ENCODE measurements at regions of chr17 and their contacts with region 1.

Region 1: DNA sequence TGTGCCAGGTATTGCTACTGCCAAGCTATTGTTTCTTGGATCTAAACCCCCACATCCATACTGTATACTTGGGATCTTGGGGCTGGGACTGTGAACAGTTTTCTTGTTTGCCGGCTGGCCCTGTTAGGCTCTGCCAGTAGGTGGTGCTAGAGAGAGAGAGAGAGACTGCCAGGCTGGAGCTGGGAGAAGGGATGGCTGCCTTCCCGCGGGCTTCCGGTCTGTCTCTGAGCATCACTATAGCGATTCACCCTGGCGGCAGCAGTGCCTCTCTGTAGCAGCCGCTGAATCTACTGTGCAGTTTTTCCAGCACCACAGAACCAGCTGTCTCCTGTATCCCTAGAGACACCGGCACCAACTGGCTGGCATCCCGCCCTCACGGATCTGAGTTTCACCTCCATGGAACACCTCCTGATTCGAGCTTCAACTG is 201.2 kb downstream of the UTP18 start:
- DNase-seq: peak; percentile 79
- ATAC-seq: peak; percentile 100
- H3K4me3 Mint-ChIP-seq: no peak overlapping the region
- H3K27ac Mint-ChIP-seq: no peak overlapping the region
- H3K4me1 Mint-ChIP-seq: no peaks in the 10 kb centered on the region
- H3K27me3 Mint-ChIP-seq: no peaks in the 10 kb centered on the region; the same call in 1 of the 2 replicates
- CTCF ChIP-seq: peak; percentile 78

Region 2: DNA sequence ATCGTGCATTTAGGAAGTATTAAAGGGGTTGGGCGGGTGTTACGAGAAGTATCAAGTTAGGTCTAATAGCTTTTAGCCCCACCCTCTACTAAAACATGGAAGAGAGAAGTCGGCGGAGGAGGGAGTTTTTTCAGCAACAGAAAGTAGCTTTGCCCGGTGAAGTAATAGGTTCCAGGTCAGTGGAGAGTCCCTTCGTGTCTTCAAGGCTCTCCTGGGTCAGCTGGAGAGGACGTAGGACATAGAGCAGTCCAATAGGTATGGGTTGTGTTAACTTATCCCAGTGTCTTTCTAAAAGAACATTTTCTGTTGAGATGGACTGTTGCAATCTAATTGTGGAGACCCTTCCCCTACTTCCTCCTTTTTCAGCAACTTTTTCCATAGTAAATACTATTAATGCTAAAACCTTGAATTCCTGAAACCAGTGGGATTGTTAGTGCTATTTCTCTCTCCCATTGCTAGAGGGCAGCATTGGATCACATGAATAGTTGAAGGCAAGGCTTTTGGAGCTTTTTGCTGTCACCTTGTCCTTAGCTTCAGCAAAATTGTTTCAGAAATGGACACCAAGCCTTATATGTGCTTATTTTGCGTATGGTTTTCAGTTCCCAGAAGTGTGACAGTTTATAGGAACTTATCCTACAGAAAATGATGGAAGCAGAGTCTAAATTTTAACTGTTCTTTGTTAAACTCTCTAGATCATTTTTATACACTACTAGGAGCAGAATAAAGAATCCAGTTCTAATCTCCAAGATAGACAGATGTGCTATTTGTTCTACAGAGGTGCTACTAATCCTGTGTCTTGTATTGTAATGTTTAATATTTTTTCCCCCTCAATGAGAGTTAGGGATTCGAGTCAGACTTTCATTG is 162.9 kb before region 1 on chr17:
- CTCF ChIA-PET with region 1: interaction called, 12 read pairs
- POLR2A ChIA-PET with region 1: no interaction called
- DNase-seq: no peak
- ATAC-seq: peak; percentile 80
- H3K4me3 Mint-ChIP-seq: no peak overlapping the region
- H3K27ac Mint-ChIP-seq: peak overlapping the region; percentile 51
- H3K4me1 Mint-ChIP-seq: peaks cover 35% of the 10 kb centered on the region
- H3K27me3 Mint-ChIP-seq: no peaks in the 10 kb centered on the region
- CTCF ChIP-seq: peak; percentile 32; the same call in 1 of the 2 replicates

Region 3: GRCh38 chr17:51407559-51407958 is 54.0 kb before region 1 on chr17:
- CTCF ChIA-PET with region 1: interaction called, 11 read pairs
- POLR2A ChIA-PET with region 1: no interaction called
- DNase-seq: no peak
- ATAC-seq: no peak
- H3K4me3 Mint-ChIP-seq: no peak overlapping the region
- H3K27ac Mint-ChIP-seq: no peak overlapping the region
- H3K4me1 Mint-ChIP-seq: 0 out of 2 replicates have a peak, but pooled peaks cover 4% of the 10 kb centered on the region
- H3K27me3 Mint-ChIP-seq: peaks cover 2% of the 10 kb centered on the region; the same call in 1 of the 2 replicates
- CTCF ChIP-seq: no peak

Region 4: DNA sequence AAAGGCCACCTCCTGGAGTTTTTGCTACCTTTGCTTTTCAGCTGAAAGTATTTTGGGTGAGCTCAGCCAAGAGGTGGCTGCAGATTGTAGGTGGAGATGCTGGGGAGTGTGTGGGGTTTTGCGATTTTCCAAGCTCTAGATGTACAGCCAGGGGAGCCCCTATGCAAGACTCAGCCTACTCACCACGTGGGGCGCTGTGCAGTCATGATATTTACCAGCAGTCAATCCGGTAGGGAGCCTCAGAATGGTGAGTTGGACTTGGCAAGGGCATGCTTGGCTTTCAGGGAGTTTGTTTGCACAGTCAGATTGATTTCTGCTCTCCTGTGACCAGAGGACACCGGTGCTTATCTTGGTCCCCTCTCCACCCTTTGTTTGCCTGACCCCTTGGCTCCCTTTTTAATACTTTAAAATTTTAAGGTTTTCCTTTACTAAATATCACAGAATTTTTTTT is 25.9 kb before region 1 on chr17:
- CTCF ChIA-PET with region 1: interaction called, 28 read pairs
- POLR2A ChIA-PET with region 1: no interaction called
- DNase-seq: peak; percentile 79
- ATAC-seq: peak; percentile 97
- H3K4me3 Mint-ChIP-seq: no peak overlapping the region
- H3K27ac Mint-ChIP-seq: no peak overlapping the region
- H3K4me1 Mint-ChIP-seq: peaks cover 15% of the 10 kb centered on the region
- H3K27me3 Mint-ChIP-seq: no peaks in the 10 kb centered on the region
- CTCF ChIP-seq: peak; percentile 38; the same call in 1 of the 2 replicates

Region 5: GRCh38 chr17:51472670-51473205 is 11.1 kb after region 1 on chr17:
- CTCF ChIA-PET with region 1: interaction called, 37 read pairs
- POLR2A ChIA-PET with region 1: no interaction called
- DNase-seq: no peak
- ATAC-seq: no peak
- H3K4me3 Mint-ChIP-seq: no peak overlapping the region
- H3K27ac Mint-ChIP-seq: no peak overlapping the region
- H3K4me1 Mint-ChIP-seq: peaks cover 14% of the 10 kb centered on the region
- H3K27me3 Mint-ChIP-seq: no peaks in the 10 kb centered on the region
- CTCF ChIP-seq: no peak

Region 6: DNA sequence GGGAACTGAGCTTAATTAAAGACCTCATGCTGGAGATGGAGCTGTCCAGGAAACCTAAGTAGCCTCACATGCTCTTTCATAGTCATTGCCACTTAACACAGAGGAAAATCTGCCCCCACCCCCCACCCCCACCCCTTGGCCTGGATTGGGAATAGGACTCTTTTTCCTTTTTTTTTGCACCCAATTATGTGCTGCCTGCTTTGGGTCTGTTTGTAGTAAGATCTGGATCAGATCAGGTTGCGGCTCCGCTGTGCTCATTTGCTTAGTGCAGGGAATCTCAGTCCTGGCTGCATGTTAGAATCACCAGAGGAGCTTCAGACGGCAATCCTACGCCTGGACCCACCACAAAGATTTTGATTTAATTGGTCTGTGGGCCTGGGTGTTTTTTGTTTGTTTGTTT is 17.7 kb after region 1 on chr17:
- CTCF ChIA-PET with region 1: interaction called, 37 read pairs
- POLR2A ChIA-PET with region 1: no interaction called
- DNase-seq: no peak
- ATAC-seq: no peak
- H3K4me3 Mint-ChIP-seq: no peak overlapping the region
- H3K27ac Mint-ChIP-seq: no peak overlapping the region
- H3K4me1 Mint-ChIP-seq: peaks cover 10% of the 10 kb centered on the region
- H3K27me3 Mint-ChIP-seq: no peaks in the 10 kb centered on the region
- CTCF ChIP-seq: no peak

Region 7: GRCh38 chr17:51585514-51586104 is 124.0 kb after region 1 on chr17:
- CTCF ChIA-PET with region 1: interaction called, 10 read pairs
- POLR2A ChIA-PET with region 1: no interaction called
- DNase-seq: peak; percentile 55
- ATAC-seq: peak; percentile 93
- H3K4me3 Mint-ChIP-seq: no peak overlapping the region
- H3K27ac Mint-ChIP-seq: no peak overlapping the region
- H3K4me1 Mint-ChIP-seq: no peaks in the 10 kb centered on the region
- H3K27me3 Mint-ChIP-seq: no peaks in the 10 kb centered on the region
- CTCF ChIP-seq: peak; percentile 22; the same call in 1 of the 2 replicates

Measured in WTC11 (cell line).